CD8-positive, alpha-beta memory T cell (primary cell): ENCODE measurements at regions of chr3 and their contacts with region 1.

Region 1: GRCh38 chr3:61371123-61371522 is 119.9 kb upstream of the FHIT start:
- DNase-seq: no peak
- H3K4me3 ChIP-seq: no peak overlapping the region
- H3K4me3 Mint-ChIP-seq: no peak overlapping the region
- H3K27ac ChIP-seq: no peak overlapping the region
- H3K27ac Mint-ChIP-seq: no peak overlapping the region
- H3K4me1 ChIP-seq: no peaks in the 10 kb centered on the region
- H3K4me1 Mint-ChIP-seq: no peaks in the 10 kb centered on the region
- H3K27me3 ChIP-seq: no peaks in the 10 kb centered on the region
- H3K27me3 Mint-ChIP-seq: peaks cover 0 to 3% of the 10 kb centered on the region in 2 donors

Region 2: DNA sequence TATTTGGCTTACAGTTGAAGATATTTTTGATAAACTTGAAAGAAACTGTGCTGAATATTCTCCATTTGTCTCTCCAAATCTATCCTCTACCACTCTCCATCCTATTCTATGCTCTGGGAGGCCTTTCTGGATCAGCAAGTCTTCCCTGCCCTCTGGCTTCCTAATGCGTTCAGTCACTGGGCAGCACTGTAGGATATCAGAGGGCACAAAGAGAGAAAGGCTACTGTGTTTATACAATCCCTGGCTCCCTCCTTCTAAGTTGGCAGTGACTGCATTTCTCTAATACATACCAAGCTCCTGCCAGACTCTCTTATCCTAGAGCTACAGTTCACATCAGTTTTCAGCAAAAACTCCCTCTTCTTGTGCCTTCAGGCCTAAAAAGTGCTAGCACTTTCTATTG is 17.7 kb before region 1 on chr3:
- CTCF ChIA-PET with region 1: no interaction called
- POLR2A ChIA-PET with region 1: no interaction called
- DNase-seq: no peak
- H3K4me3 ChIP-seq: no peak overlapping the region
- H3K4me3 Mint-ChIP-seq: no peak overlapping the region
- H3K27ac ChIP-seq: no peak overlapping the region
- H3K27ac Mint-ChIP-seq: no peak overlapping the region
- H3K4me1 ChIP-seq: no peaks in the 10 kb centered on the region
- H3K4me1 Mint-ChIP-seq: no peaks in the 10 kb centered on the region
- H3K27me3 ChIP-seq: no peaks in the 10 kb centered on the region
- H3K27me3 Mint-ChIP-seq: peaks cover 3 to 4% of the 10 kb centered on the region in 2 donors

Region 3: GRCh38 chr3:61381745-61382392 is 10.7 kb after region 1 on chr3:
- CTCF ChIA-PET with region 1: interaction called, 11 read pairs
- POLR2A ChIA-PET with region 1: no interaction called
- DNase-seq: peak in 2 of 5 donors; percentile 9 to 32
- H3K4me3 ChIP-seq: no peak overlapping the region
- H3K4me3 Mint-ChIP-seq: no peak overlapping the region
- H3K27ac ChIP-seq: no peak overlapping the region
- H3K27ac Mint-ChIP-seq: no peak overlapping the region
- H3K4me1 ChIP-seq: no peaks in the 10 kb centered on the region
- H3K4me1 Mint-ChIP-seq: no peaks in the 10 kb centered on the region
- H3K27me3 ChIP-seq: no peaks in the 10 kb centered on the region
- H3K27me3 Mint-ChIP-seq: peaks cover 0 to 14% of the 10 kb centered on the region in 2 donors

Region 4: DNA sequence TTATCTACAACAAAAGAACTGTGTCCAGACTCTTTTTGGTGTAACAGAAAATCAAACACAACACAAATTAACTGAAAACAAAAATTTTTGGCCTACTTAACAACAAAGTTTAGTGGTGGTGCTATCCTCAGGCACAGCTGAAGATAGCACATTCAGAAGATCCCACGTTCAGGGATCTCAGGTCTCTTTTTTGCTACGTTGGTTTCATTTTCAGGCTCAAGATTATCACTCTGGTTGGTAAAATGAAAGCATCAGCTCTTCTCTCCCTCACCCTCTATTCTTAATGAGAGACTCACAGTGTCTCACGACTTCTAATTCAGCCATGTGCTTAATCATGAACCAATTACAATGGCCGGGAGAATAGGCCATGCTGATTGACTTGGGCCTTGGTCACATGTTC is 43.3 kb after region 1 on chr3:
- CTCF ChIA-PET with region 1: no interaction called
- POLR2A ChIA-PET with region 1: no interaction called
- DNase-seq: no peak
- H3K4me3 ChIP-seq: no peak overlapping the region
- H3K4me3 Mint-ChIP-seq: no peak overlapping the region
- H3K27ac ChIP-seq: no peak overlapping the region
- H3K27ac Mint-ChIP-seq: no peak overlapping the region
- H3K4me1 ChIP-seq: no peaks in the 10 kb centered on the region
- H3K4me1 Mint-ChIP-seq: no peaks in the 10 kb centered on the region
- H3K27me3 ChIP-seq: no peaks in the 10 kb centered on the region
- H3K27me3 Mint-ChIP-seq: peaks cover 1 to 11% of the 10 kb centered on the region in 2 donors

Region 5: GRCh38 chr3:61464518-61465140 is 93.5 kb after region 1 on chr3:
- CTCF ChIA-PET with region 1: no interaction called
- POLR2A ChIA-PET with region 1: no interaction called
- DNase-seq: no peak
- H3K4me3 ChIP-seq: no peak overlapping the region
- H3K4me3 Mint-ChIP-seq: no peak overlapping the region
- H3K27ac ChIP-seq: no peak overlapping the region
- H3K27ac Mint-ChIP-seq: no peak overlapping the region
- H3K4me1 ChIP-seq: no peaks in the 10 kb centered on the region
- H3K4me1 Mint-ChIP-seq: no peaks in the 10 kb centered on the region
- H3K27me3 ChIP-seq: no peaks in the 10 kb centered on the region
- H3K27me3 Mint-ChIP-seq: peaks cover 0 to 3% of the 10 kb centered on the region in 2 donors